Psoas muscle (tissue), 8 donors: ENCODE measurements at regions of chr6 and their contacts with region 1.

Region 1: DNA sequence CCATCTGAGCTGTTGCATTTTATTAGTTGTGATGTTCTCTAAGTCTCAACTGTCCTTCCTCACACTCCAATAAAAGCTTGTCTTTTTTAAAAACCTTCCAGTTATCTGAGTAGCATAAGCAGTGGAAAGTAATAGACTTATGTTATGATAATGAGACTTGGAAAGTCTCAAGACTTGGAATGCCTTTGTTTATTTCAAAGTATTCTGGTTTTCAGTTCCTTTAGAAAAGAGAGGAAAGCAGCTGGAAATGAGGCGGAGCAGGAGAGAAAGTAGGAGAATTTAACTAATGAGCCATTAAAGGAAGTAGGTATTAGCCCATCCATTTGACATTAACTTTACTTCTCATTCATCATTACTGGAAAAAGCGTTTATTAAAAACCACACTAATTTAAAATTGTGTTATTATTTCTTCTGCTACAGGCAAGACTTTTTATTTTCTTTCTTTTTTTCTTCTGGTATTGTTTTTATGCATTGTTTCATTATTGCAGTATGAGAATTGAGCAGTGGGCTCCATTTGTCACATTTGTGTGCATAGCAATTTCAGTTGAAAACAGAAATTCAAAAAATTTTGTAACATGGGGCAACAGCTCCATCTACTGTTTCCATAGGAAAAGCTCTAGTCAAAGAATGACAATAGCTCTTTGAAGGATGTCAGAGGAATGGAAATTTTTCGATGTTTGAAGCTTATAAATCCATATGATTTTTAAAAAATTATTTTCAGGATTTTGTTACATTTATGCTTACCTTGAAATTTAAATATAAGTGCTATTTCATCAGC is 194.8 kb downstream of the COL9A1 start:
- DNase-seq: no peak
- ATAC-seq: peak in 1 of 4 donors; percentile 62
- H3K4me3 ChIP-seq: no peak overlapping the region
- H3K27ac ChIP-seq: no peak overlapping the region
- H3K4me1 ChIP-seq: no peaks in the 10 kb centered on the region
- H3K27me3 ChIP-seq: no peaks in the 10 kb centered on the region
- CTCF ChIP-seq: peak; percentile 69

Region 2: DNA sequence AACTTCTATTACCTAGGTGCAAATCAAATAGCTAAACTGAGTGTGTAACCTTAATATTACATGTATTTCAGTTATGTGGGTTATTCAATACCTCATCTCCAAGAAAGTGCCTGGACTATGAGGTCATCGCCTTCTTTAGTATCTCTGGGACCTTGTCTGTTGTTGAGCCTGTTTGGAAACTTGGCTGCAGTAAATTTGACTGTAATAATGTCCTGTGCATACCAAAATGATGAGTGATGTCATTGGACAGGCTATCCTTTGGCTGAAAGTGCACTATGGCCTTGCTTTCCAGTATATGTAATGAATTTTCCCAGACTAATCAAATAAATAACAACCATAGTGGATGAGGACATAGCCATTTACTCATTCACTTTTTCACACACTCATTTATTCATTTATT is 1017.9 kb before region 1 on chr6:
- intact Hi-C with region 1: no loop called
- DNase-seq: no peak
- ATAC-seq: peak in 2 of 4 donors; percentile 42 to 64
- H3K4me3 ChIP-seq: no peak overlapping the region
- H3K27ac ChIP-seq: no peak overlapping the region
- H3K4me1 ChIP-seq: no peaks in the 10 kb centered on the region
- H3K27me3 ChIP-seq: no peaks in the 10 kb centered on the region
- CTCF ChIP-seq: no peak

Region 3: GRCh38 chr6:69719602-69720193 is 388.3 kb before region 1 on chr6:
- intact Hi-C with region 1: loop called in 1 of 2 experiments (anchors 10 kb)
- DNase-seq: no peak
- ATAC-seq: no peak
- H3K4me3 ChIP-seq: no peak overlapping the region
- H3K27ac ChIP-seq: no peak overlapping the region
- H3K4me1 ChIP-seq: no peaks in the 10 kb centered on the region
- H3K27me3 ChIP-seq: no peaks in the 10 kb centered on the region
- CTCF ChIP-seq: peak; percentile 29

Region 4: GRCh38 chr6:69835414-69836179 is 272.4 kb before region 1 on chr6:
- intact Hi-C with region 1: loop called (anchors 2 to 5 kb)
- DNase-seq: no peak
- ATAC-seq: peak; percentile 62 to 81 (median 71)
- H3K4me3 ChIP-seq: no peak overlapping the region
- H3K27ac ChIP-seq: no peak overlapping the region
- H3K4me1 ChIP-seq: peaks cover 11% of the 10 kb centered on the region
- H3K27me3 ChIP-seq: no peaks in the 10 kb centered on the region
- CTCF ChIP-seq: peak; percentile 90

Region 5: GRCh38 chr6:70151616-70152015 is 43.6 kb after region 1 on chr6:
- intact Hi-C with region 1: no loop called
- DNase-seq: no peak
- ATAC-seq: peak; percentile 95 to 100 (median 98)
- H3K4me3 ChIP-seq: no peak overlapping the region
- H3K27ac ChIP-seq: no peak overlapping the region
- H3K4me1 ChIP-seq: peaks cover 13% of the 10 kb centered on the region
- H3K27me3 ChIP-seq: no peaks in the 10 kb centered on the region
- CTCF ChIP-seq: no peak

Region 6: DNA sequence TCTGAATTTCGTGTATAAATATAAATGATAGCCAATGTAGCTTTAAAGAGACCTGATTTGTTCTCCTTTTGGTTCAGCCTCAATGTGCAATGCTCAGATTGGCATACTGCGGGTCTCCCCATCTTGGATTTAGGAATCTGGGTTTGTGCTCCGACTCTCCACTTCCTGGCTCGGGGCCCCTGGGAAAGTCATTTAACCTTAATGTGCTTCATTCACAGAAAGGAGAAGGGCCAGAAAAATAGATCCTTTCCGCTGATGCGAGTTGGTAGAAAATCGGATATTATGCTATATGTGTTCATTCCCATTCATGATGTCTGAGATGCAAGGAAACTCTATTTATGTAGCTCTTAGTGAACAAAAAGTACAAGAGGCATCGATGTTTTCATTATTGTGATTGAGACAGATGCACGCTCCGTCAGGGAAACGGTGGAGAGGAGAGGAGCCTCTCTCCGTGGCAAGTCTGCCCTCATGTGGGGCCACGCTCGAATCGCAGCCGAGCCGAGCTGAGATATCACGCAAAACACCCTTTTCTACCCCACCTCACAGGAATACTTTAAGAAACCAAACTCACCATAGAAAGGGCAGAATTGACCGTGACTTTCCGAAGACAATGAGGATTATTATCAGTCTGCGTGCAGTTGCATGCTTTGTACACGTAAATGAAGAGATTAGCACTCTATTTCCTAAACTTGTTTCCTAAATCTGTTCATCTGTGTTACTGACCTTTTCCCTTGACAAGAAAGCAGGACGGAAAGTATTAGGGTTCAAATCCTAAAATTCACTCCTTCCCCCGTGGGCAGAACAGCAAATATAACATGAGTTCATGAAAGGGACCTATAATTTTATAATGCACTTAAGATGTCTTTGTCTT is 58.3 kb after region 1 on chr6:
- intact Hi-C with region 1: loop called (anchors 5 kb)
- DNase-seq: peak; percentile 28 to 61
- ATAC-seq: peak; percentile 71 to 86 (median 83)
- H3K4me3 ChIP-seq: peak overlapping the region; percentile 9
- H3K27ac ChIP-seq: no peak overlapping the region
- H3K4me1 ChIP-seq: no peaks in the 10 kb centered on the region
- H3K27me3 ChIP-seq: no peaks in the 10 kb centered on the region
- CTCF ChIP-seq: peak; percentile 68

Region 7: GRCh38 chr6:71103130-71103529 is 995.1 kb after region 1 on chr6:
- intact Hi-C with region 1: no loop called
- DNase-seq: no peak
- ATAC-seq: no peak
- H3K4me3 ChIP-seq: no peak overlapping the region
- H3K27ac ChIP-seq: no peak overlapping the region
- H3K4me1 ChIP-seq: no peaks in the 10 kb centered on the region
- H3K27me3 ChIP-seq: no peaks in the 10 kb centered on the region
- CTCF ChIP-seq: no peak